ENCODE measurements at regions of chr14 and their contacts with region 1.

Region 1: DNA sequence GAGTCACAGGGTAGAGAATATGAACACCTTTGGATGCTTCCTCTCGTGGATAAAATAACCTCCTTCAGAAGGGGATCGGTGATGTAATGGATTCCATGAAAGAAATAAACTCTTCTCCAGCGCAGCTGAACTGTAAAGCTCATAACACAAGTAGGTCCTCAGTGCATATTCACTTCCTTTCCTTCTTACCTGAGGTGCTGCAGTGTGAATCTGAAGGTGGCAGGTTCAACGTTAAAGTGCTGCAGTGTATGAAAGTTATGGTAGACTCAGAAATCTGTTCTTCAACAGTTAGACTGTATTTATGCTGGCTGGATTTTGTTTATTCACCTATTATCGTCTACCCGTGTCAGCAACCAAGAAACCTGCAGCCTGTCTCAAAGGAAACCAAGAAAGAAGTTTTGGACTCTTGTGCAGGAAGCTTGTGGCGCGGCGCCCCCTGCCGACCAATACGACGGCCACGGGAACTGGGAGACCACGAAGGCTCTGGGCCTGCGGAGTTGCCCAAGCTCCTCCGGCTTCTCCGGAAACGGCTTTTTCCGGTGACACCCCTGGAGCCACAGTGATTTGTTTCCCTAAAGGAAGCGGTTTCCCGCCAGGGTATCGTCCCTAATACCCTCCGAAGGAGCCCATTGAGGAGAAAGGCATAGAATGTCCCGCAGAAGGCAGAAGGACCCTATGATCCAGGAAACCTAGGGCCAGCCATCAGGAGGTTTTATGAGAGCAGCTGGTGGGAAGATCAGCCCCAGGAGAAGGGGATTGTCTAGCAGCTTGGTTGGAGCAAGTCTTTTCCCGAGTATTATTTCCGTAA is 17.6 kb upstream of the RNASE3 start:
- DNase-seq: peak; percentile 77
- ATAC-seq: peak; percentile 56
- H3K4me3 ChIP-seq: peak overlapping the region in 1 of 5 experiments; percentile 26
- H3K4me3 Mint-ChIP-seq: peak overlapping the region; percentile 54
- H3K27ac ChIP-seq: no peak overlapping the region
- H3K27ac Mint-ChIP-seq: no peak overlapping the region
- H3K4me1 ChIP-seq: peaks cover 6 to 9% of the 10 kb centered on the region in 2 donors
- H3K4me1 Mint-ChIP-seq: peaks cover 13% of the 10 kb centered on the region
- H3K27me3 ChIP-seq: peaks cover 0 to 17% (median 2%) of the 10 kb centered on the region in 4 experiments
- H3K27me3 Mint-ChIP-seq: peaks cover 37% of the 10 kb centered on the region
- CTCF ChIP-seq: peak; percentile 82

Region 2: DNA sequence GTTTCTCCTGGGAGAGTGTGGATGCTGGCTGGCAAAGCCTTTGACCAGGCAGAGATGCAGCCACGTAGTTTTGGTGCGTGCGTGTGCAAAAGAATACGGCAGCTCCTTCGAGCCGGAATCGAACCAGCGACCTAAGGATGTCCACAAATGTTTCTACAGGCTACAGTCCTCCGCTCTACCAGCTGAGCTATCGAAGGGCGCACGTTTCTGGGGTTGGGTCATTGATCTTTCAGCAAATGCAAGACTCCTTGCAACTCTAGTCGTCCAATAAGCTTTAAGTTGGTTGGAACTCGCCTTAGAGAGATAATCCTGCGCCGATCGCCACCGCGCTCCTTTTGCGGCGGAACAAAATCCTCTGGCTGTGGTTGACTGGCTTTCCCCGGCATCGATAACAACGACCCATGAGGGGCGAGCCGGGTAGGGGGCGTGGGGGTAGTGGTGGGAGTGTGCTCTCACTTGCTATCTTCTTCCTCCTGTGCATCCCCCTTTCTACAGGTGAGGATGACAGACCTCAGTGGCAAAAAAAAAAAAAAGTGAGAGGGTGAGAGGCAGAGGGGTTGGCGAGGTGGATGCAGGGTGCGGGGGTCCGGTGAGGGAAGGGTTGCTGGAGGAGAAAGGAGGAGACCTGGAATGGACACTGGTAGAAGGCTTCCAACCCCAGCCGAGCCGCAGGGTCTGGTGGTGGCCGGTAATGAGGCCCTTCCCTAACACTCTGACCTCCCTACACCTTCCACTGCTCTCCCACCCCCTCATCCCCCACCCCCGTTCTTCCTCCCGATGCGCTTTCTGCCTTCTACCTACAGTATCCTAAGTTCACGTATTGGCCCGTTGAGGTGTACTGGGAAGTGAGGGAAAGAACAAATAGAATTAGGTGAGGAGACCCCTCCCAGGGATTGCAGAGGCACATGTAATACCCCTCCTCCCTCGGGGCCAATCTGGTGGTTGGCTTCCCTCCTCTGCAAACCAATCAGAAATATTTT is 220.3 kb before region 1 on chr14:
- CTCF ChIA-PET with region 1: interaction called, 3 read pairs
- POLR2A ChIA-PET with region 1: no interaction called
- intact Hi-C with region 1: loop called (anchors 5 kb)
- DNase-seq: peak; percentile 57
- ATAC-seq: peak; percentile 21
- H3K4me3 ChIP-seq: peak overlapping the region in 2 of 5 experiments; percentile 32 to 45
- H3K4me3 Mint-ChIP-seq: peak overlapping the region; percentile 68
- H3K27ac ChIP-seq: no peak overlapping the region
- H3K27ac Mint-ChIP-seq: peak overlapping the region; percentile 5
- H3K4me1 ChIP-seq: peaks cover 26 to 28% of the 10 kb centered on the region in 2 donors
- H3K4me1 Mint-ChIP-seq: peaks cover 27% of the 10 kb centered on the region
- H3K27me3 ChIP-seq: peaks cover 0 to 56% (median 44%) of the 10 kb centered on the region in 4 experiments
- H3K27me3 Mint-ChIP-seq: peaks cover 69% of the 10 kb centered on the region
- CTCF ChIP-seq: no peak

Region 3: DNA sequence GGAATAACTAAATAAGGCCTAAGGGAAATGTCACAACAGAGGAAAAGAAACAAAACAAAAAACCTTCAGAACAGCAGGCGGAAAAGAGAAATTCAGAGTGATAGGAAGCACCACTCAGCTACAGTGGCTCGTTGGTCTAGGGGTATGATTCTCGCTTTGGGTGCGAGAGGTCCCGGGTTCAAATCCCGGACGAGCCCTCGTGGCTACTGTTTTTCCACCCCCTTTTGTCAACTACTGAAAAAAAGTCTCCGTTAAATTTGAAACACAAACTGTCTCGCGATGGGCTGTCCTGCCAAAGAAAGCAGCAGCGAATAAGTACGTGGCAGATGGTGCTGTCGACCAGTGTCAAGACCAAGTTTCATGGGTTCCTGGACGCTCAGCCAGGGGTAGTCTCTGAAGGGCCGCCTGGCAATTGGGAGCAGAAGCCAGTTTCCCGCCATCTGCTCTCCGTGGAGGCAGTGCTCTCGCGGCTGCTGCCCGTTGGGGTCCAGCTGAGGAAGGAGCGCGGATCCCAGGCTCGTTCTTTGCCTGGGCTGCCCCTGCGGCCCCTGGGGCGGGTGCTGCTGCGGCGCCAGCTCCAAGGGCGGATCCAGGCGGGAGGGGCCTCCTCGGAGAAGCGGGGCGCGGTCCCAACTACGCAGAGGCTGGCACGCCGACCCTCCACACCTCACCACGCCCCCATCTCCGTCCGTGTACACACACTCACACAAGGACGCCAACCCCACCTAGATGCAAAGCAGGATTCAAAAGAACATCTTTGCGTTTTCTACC is 189.5 kb before region 1 on chr14 and contains the start of gene RNASE4:
- CTCF ChIA-PET with region 1: no interaction called
- POLR2A ChIA-PET with region 1: no interaction called
- intact Hi-C with region 1: no loop called
- DNase-seq: peak; percentile 91
- ATAC-seq: peak; percentile 17
- H3K4me3 ChIP-seq: peak within 1 kb of the TSS; percentile 81 to 95 (median 92)
- H3K4me3 Mint-ChIP-seq: no peak within 1 kb of the TSS
- H3K27ac ChIP-seq: peak within 1 kb of the TSS; percentile 92 to 94
- H3K27ac Mint-ChIP-seq: no peak within 1 kb of the TSS
- H3K4me1 ChIP-seq: peaks cover 31 to 48% of the 10 kb centered on the region in 2 donors
- H3K4me1 Mint-ChIP-seq: peaks cover 10% of the 10 kb centered on the region
- H3K27me3 ChIP-seq: no peaks in the 10 kb centered on the region
- H3K27me3 Mint-ChIP-seq: no peaks in the 10 kb centered on the region
- CTCF ChIP-seq: no peak
- total RNA-seq, gene RNASE4: 0.49 and 1.8 TPM in 2 replicates

Region 4: GRCh38 chr14:21068521-21069387 is 195.2 kb after region 1 on chr14:
- CTCF ChIA-PET with region 1: no interaction called
- POLR2A ChIA-PET with region 1: no interaction called
- intact Hi-C with region 1: no loop called
- DNase-seq: peak; percentile 81
- ATAC-seq: peak; percentile 48
- H3K4me3 ChIP-seq: peak overlapping the region in 3 of 5 experiments; percentile 53 to 69 (median 59)
- H3K4me3 Mint-ChIP-seq: peak overlapping the region; percentile 85
- H3K27ac ChIP-seq: no peak overlapping the region
- H3K27ac Mint-ChIP-seq: no peak overlapping the region
- H3K4me1 ChIP-seq: peaks cover 34 to 40% of the 10 kb centered on the region in 2 donors
- H3K4me1 Mint-ChIP-seq: peaks cover 44% of the 10 kb centered on the region
- H3K27me3 ChIP-seq: peaks cover 0 to 45% (median 18%) of the 10 kb centered on the region in 4 experiments
- H3K27me3 Mint-ChIP-seq: peaks cover 36% of the 10 kb centered on the region
- CTCF ChIP-seq: peak; percentile 69

Measured in B cell (primary cell).